ENCODE measurements at regions of chrX and their contacts with region 1.

Region 1: GRCh38 chrX:102155806-102156179 is at the start of gene BEX5:
- DNase-seq: peak; percentile 60 to 83 (median 65)
- H3K4me3 ChIP-seq: peak within 1 kb of the TSS; percentile 57 to 74
- H3K4me3 Mint-ChIP-seq: peak within 1 kb of the TSS; percentile 96 to 100 (median 98)
- H3K27ac ChIP-seq: peak within 1 kb of the TSS; percentile 77
- H3K27ac Mint-ChIP-seq: peak within 1 kb of the TSS; percentile 98 to 100 (median 99)
- H3K4me1 ChIP-seq: peaks cover 8% of the 10 kb centered on the region
- H3K4me1 Mint-ChIP-seq: peaks cover 0 to 14% (median 10%) of the 10 kb centered on the region in 4 donors
- H3K27me3 ChIP-seq: no peaks in the 10 kb centered on the region
- H3K27me3 Mint-ChIP-seq: no peaks in the 10 kb centered on the region
- total RNA-seq, gene BEX5: 5.9 to 7.4 TPM

Region 2: GRCh38 chrX:102185967-102186720 is 30.4 kb after region 1 on chrX:
- CTCF ChIA-PET with region 1: no interaction called
- POLR2A ChIA-PET with region 1: no interaction called
- intact Hi-C with region 1: no loop called
- DNase-seq: no peak
- H3K4me3 ChIP-seq: no peak overlapping the region
- H3K4me3 Mint-ChIP-seq: no peak overlapping the region
- H3K27ac ChIP-seq: no peak overlapping the region
- H3K27ac Mint-ChIP-seq: no peak overlapping the region
- H3K4me1 ChIP-seq: no peaks in the 10 kb centered on the region
- H3K4me1 Mint-ChIP-seq: no peaks in the 10 kb centered on the region
- H3K27me3 ChIP-seq: no peaks in the 10 kb centered on the region
- H3K27me3 Mint-ChIP-seq: peaks cover 0 to 1% of the 10 kb centered on the region in 2 donors

Region 3: GRCh38 chrX:102659790-102660757 is 504.3 kb after region 1 on chrX:
- CTCF ChIA-PET with region 1: no interaction called
- POLR2A ChIA-PET with region 1: interaction called, 4 read pairs
- intact Hi-C with region 1: loop called (anchors 1 kb)
- DNase-seq: peak; percentile 73 to 86 (median 77)
- H3K4me3 ChIP-seq: peak overlapping the region; percentile 11 to 64
- H3K4me3 Mint-ChIP-seq: peak overlapping the region; percentile 86 to 96 (median 90)
- H3K27ac ChIP-seq: peak overlapping the region; percentile 36
- H3K27ac Mint-ChIP-seq: peak overlapping the region; percentile 74 to 97 (median 95)
- H3K4me1 ChIP-seq: peaks cover 5% of the 10 kb centered on the region
- H3K4me1 Mint-ChIP-seq: peaks cover 14 to 39% (median 22%) of the 10 kb centered on the region in 4 donors
- H3K27me3 ChIP-seq: no peaks in the 10 kb centered on the region
- H3K27me3 Mint-ChIP-seq: no peaks in the 10 kb centered on the region